ENCODE measurements at regions of chr9 and their contacts with region 1.

Region 1: GRCh38 chr9:136239981-136240330 is 5.7 kb downstream of the QSOX2 start:
- DNase-seq: peak; percentile 88
- ATAC-seq: peak; percentile 76
- H3K4me3 ChIP-seq: peak overlapping the region in 3 of 5 experiments; percentile 11 to 40 (median 26)
- H3K4me3 Mint-ChIP-seq: peak overlapping the region; percentile 94
- H3K27ac ChIP-seq: peak overlapping the region; percentile 54 to 78
- H3K27ac Mint-ChIP-seq: peak overlapping the region; percentile 90
- H3K4me1 ChIP-seq: peaks cover 72 to 86% of the 10 kb centered on the region in 2 donors
- H3K4me1 Mint-ChIP-seq: peaks cover 89% of the 10 kb centered on the region
- H3K27me3 ChIP-seq: no peaks in the 10 kb centered on the region
- H3K27me3 Mint-ChIP-seq: no peaks in the 10 kb centered on the region
- CTCF ChIP-seq: no peak

Region 2: GRCh38 chr9:136093995-136094881 is 145.7 kb before region 1 on chr9:
- CTCF ChIA-PET with region 1: no interaction called
- POLR2A ChIA-PET with region 1: no interaction called
- intact Hi-C with region 1: no loop called
- DNase-seq: no peak
- ATAC-seq: peak; percentile 41
- H3K4me3 ChIP-seq: peak overlapping the region in 4 of 5 experiments; percentile 15 to 40 (median 36)
- H3K4me3 Mint-ChIP-seq: peak overlapping the region; percentile 68
- H3K27ac ChIP-seq: no peak overlapping the region
- H3K27ac Mint-ChIP-seq: no peak overlapping the region
- H3K4me1 ChIP-seq: peaks cover 10 to 14% of the 10 kb centered on the region in 2 donors
- H3K4me1 Mint-ChIP-seq: peaks cover 9% of the 10 kb centered on the region
- H3K27me3 ChIP-seq: peaks cover 0 to 52% (median 10%) of the 10 kb centered on the region in 4 experiments
- H3K27me3 Mint-ChIP-seq: peaks cover 29% of the 10 kb centered on the region
- CTCF ChIP-seq: no peak

Region 3: DNA sequence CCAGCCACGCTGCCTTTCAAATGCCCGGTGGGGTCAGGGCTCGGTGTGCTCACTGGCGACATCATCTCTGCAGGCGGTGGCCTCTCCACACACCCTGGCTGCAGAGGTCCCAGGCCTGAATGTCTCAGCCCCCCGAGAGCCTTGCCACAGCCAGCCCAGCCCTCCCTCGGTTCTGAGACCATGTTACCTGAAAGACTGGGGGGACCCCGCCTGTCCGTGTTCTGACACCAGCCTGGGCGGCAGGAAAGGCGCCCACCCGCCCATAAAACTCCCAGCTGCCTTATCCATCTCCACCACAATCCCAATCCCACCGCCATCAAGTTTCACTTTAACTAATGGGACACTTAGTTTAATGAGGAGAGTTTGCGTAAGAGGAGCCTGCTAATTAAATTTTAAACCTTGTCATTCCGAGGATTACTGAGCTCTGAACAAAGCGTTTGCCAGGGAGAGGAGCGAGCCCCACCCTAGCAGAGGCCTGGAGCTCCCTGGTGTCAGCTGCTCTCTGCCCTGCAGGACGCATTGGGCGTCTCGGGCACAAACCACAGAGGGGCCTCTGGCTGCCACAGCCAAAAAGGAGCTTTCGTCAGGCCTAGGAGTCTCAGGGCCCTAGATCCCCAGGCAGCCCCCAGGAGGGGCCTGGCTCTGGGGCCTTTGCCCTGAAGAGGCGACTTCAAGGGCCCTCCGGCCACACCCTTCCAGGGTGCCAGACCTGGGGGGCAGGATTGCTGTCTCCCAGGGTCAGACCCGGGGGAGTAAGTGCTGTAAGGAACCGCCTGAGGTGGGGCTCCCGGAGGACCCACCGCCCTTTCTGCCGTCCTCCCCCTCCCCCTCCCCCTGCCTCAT is 50.3 kb before region 1 on chr9:
- CTCF ChIA-PET with region 1: no interaction called
- POLR2A ChIA-PET with region 1: no interaction called
- intact Hi-C with region 1: loop called (anchors 5 kb)
- DNase-seq: no peak
- ATAC-seq: no peak
- H3K4me3 ChIP-seq: no peak overlapping the region
- H3K4me3 Mint-ChIP-seq: no peak overlapping the region
- H3K27ac ChIP-seq: no peak overlapping the region
- H3K27ac Mint-ChIP-seq: no peak overlapping the region
- H3K4me1 ChIP-seq: peaks cover 15 to 23% of the 10 kb centered on the region in 2 donors
- H3K4me1 Mint-ChIP-seq: peaks cover 8% of the 10 kb centered on the region
- H3K27me3 ChIP-seq: peaks cover 0 to 84% (median 25%) of the 10 kb centered on the region in 4 experiments
- H3K27me3 Mint-ChIP-seq: peaks cover 46% of the 10 kb centered on the region
- CTCF ChIP-seq: no peak

Region 4: GRCh38 chr9:136297016-136297691 is 57.2 kb after region 1 on chr9:
- CTCF ChIA-PET with region 1: no interaction called
- POLR2A ChIA-PET with region 1: no interaction called
- intact Hi-C with region 1: no loop called
- DNase-seq: no peak
- ATAC-seq: no peak
- H3K4me3 ChIP-seq: no peak overlapping the region
- H3K4me3 Mint-ChIP-seq: no peak overlapping the region
- H3K27ac ChIP-seq: no peak overlapping the region
- H3K27ac Mint-ChIP-seq: no peak overlapping the region
- H3K4me1 ChIP-seq: peaks cover 0 to 5% of the 10 kb centered on the region in 2 donors
- H3K4me1 Mint-ChIP-seq: peaks cover 4% of the 10 kb centered on the region
- H3K27me3 ChIP-seq: no peaks in the 10 kb centered on the region
- H3K27me3 Mint-ChIP-seq: no peaks in the 10 kb centered on the region
- CTCF ChIP-seq: no peak